Endothelial cell of umbilical vein (primary cell): ENCODE measurements at regions of chr7 and their contacts with region 1.

Region 1: GRCh38 chr7:114865564-114865963 is 56.3 kb upstream of the MDFIC start:
- DNase-seq: peak; percentile 64
- H3K4me3 ChIP-seq: no peak overlapping the region
- H3K27ac ChIP-seq: no peak overlapping the region
- H3K4me1 ChIP-seq: no peaks in the 10 kb centered on the region
- H3K27me3 ChIP-seq: no peaks in the 10 kb centered on the region
- CTCF ChIP-seq: peak; percentile 65 to 67
- POLR2A ChIP-seq: no peak

Region 2: DNA sequence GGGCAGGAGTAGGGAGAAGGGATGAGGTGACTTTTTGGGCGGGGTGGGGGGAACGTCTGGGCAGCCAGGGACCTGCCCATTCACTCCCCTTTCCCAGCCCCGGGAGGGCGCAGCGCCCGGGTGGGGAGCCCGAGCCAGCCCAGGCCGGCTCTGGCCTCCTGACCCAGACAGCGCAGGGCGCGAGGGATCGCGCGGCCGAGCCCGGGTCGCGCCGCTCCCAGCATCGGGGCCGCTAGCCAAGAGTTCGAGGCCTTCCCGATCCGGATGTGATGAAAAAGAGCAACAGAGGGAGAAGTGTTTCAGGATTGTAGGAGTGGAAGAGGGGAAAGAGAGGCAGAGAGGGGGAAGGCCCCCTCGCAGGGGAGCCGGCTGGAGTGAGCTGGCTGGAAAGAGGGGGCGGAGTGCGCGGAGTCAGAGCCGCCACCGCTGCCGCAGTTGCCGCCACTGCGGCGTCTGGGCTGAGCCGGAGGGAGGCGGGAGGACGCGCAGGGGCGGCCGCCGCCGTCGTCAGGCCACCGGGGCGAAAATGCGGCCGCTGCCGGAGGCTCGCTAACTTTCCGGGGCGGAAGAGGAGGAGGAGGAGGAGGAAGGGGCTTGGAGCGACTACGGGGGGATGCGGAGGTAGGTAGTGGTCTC is 56.6 kb after region 1 on chr7 and contains the start of gene MDFIC:
- CTCF ChIA-PET with region 1: interaction called, 11 read pairs
- POLR2A ChIA-PET with region 1: no interaction called
- dilution Hi-C with region 1: no loop called
- intact Hi-C with region 1: no loop called
- DNase-seq: peak; percentile 47
- H3K4me3 ChIP-seq: peak within 1 kb of the TSS; percentile 60 to 96 (median 73)
- H3K27ac ChIP-seq: peak within 1 kb of the TSS; percentile 58
- H3K4me1 ChIP-seq: peaks cover 3% of the 10 kb centered on the region
- H3K27me3 ChIP-seq: peaks cover 0 to 2% of the 10 kb centered on the region in 2 experiments
- CTCF ChIP-seq: no peak
- POLR2A ChIP-seq: peak; percentile 62
- total RNA-seq, gene MDFIC: 13.7 and 14.2 TPM in 2 replicates

Region 3: GRCh38 chr7:115217373-115217772 is 351.8 kb after region 1 on chr7:
- CTCF ChIA-PET with region 1: interaction called, 139 read pairs
- POLR2A ChIA-PET with region 1: no interaction called
- dilution Hi-C with region 1: no loop called
- intact Hi-C with region 1: loop called (anchors 1 kb)
- DNase-seq: peak; percentile 22
- H3K4me3 ChIP-seq: no peak overlapping the region
- H3K27ac ChIP-seq: no peak overlapping the region
- H3K4me1 ChIP-seq: no peaks in the 10 kb centered on the region
- H3K27me3 ChIP-seq: peaks cover 0 to 3% of the 10 kb centered on the region in 2 experiments
- CTCF ChIP-seq: peak in 1 of 2 donors; percentile 8
- POLR2A ChIP-seq: no peak

Region 4: DNA sequence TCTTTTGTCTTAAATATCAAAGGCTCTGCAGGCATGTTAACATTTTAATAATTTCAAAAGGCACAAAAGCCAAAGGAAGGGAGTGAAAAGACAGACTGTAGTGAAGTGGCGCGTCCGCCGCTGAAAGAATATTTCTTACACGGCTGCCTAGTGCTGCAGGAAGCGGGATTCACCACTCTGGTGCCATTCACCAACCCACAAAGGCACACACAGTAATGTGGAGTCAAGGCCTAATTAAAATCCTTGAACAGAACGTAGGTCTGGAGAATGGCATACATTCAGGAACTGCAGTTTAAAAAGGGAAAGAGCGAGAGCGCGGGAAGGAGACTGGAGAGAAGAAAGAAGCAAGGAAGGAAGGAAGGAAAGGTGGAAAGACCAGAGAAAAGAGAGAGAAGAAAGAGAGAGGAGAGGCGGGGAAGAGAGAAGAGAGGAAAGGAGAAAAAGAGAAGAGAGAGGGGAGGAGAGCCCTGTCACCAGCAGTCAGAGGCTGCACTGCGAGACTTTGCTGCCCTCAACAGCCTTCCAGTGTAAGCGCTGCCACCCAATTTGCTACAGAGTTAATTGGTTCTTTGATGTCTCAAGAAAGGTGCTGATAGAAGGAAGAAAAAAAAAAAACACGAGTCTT is 610.3 kb after region 1 on chr7:
- CTCF ChIA-PET with region 1: interaction called, 19 read pairs
- POLR2A ChIA-PET with region 1: no interaction called
- dilution Hi-C with region 1: no loop called
- intact Hi-C with region 1: loop called (anchors 1 kb)
- DNase-seq: no peak
- H3K4me3 ChIP-seq: no peak overlapping the region
- H3K27ac ChIP-seq: no peak overlapping the region
- H3K4me1 ChIP-seq: peaks cover 6% of the 10 kb centered on the region
- H3K27me3 ChIP-seq: peaks cover 7 to 19% of the 10 kb centered on the region in 2 experiments
- CTCF ChIP-seq: no peak
- POLR2A ChIP-seq: no peak

Region 5: GRCh38 chr7:115707258-115708012 is 841.9 kb after region 1 on chr7:
- CTCF ChIA-PET with region 1: interaction called, 31 read pairs
- POLR2A ChIA-PET with region 1: no interaction called
- dilution Hi-C with region 1: no loop called
- intact Hi-C with region 1: loop called (anchors 1 kb)
- DNase-seq: peak; percentile 8
- H3K4me3 ChIP-seq: no peak overlapping the region
- H3K27ac ChIP-seq: no peak overlapping the region
- H3K4me1 ChIP-seq: no peaks in the 10 kb centered on the region
- H3K27me3 ChIP-seq: no peaks in the 10 kb centered on the region
- CTCF ChIP-seq: no peak
- POLR2A ChIP-seq: no peak

Region 6: DNA sequence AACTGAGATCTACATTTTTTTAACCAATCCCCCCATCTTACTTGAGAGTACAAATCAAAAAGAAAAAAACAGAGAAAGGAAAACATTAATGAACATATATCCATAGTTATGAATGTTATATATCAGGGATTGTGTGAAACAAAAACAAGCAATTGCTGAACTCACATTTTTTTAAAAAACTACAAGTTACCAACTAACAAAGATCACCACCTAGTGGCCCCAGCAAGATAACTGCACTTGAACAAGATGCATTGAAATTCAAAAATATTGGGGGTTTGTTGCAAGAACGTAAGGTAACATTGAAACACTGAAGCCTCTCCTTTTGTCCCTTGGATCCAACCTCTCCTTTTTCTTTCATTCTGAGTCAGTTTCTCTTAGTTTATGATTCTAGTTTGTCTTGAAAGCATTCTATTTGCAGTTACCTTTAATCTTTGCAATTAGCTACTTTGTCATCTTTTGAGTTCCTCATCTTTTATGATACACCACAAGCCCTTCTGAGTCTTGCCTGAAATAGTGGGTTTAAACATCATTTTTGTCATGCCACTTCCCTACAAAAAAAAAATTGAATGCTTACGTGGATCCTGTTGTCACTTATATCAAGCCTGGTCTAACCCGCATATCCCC is 1257.5 kb after region 1 on chr7:
- CTCF ChIA-PET with region 1: interaction called, 13 read pairs
- POLR2A ChIA-PET with region 1: no interaction called
- dilution Hi-C with region 1: no loop called
- intact Hi-C with region 1: loop called (anchors 2 kb)
- DNase-seq: peak; percentile 55
- H3K4me3 ChIP-seq: no peak overlapping the region
- H3K27ac ChIP-seq: no peak overlapping the region
- H3K4me1 ChIP-seq: no peaks in the 10 kb centered on the region
- H3K27me3 ChIP-seq: no peaks in the 10 kb centered on the region
- CTCF ChIP-seq: peak; percentile 58 to 64
- POLR2A ChIP-seq: no peak